ENCODE measurements at regions of chr22 and their contacts with region 1.

Region 1: GRCh38 chr22:21726650-21727049 is 8.9 kb downstream of the YPEL1 start:
- DNase-seq: peak; percentile 38
- H3K4me3 Mint-ChIP-seq: no peak overlapping the region
- H3K27ac Mint-ChIP-seq: no peak overlapping the region
- H3K4me1 Mint-ChIP-seq: peaks cover 16% of the 10 kb centered on the region
- H3K27me3 Mint-ChIP-seq: no peaks in the 10 kb centered on the region

Region 2: DNA sequence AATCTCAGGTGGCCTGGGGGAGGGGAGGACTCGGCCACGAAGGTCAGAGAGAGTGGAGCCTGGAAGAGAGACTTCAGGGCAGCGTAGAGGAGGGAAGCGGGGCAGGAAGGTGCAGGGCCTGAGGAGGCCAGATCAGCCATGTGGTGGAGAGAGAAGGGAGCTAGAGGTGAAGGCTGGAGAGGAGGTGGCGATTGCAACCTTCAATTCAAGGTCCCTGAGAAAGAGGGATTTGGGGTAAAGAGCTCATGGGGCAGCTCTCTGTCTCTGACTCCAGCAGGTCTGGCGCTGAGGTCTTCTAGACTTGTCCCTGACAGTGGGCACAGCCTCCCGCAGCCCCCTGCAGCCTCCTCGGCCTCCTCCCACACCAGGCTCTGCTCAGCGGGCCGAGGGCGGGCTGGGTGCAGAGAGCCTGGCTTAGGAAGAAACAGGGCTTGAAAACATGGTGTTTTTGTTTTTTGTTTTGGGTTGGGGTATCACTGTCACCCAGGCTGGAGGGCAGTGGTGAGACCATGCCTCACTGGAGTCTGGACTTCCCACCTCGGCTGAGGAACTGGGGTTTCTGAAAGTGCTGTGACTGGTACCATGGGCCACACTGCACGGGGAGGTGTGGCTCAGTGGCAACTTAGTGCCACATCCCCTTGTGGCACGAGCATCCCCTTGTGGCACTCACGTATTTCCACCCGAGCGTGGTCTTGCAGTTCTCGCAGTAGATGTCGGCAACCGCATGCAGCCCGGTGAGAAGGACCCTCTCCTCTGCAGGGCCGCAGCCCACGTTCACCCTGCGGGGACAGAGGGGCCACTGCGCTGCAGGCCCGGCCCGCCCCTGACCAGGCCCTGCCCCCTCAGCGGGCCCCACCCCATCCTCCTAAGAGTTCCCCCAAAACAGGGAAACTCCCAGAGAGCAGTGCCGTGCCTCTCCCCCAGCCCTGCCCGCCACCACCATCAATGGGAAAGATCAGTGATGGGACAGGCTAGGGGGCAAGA is 23.7 kb before region 1 on chr22:
- intact Hi-C with region 1: no loop called
- DNase-seq: no peak
- H3K4me3 Mint-ChIP-seq: no peak overlapping the region
- H3K27ac Mint-ChIP-seq: no peak overlapping the region
- H3K4me1 Mint-ChIP-seq: no peaks in the 10 kb centered on the region
- H3K27me3 Mint-ChIP-seq: no peaks in the 10 kb centered on the region

Region 3: DNA sequence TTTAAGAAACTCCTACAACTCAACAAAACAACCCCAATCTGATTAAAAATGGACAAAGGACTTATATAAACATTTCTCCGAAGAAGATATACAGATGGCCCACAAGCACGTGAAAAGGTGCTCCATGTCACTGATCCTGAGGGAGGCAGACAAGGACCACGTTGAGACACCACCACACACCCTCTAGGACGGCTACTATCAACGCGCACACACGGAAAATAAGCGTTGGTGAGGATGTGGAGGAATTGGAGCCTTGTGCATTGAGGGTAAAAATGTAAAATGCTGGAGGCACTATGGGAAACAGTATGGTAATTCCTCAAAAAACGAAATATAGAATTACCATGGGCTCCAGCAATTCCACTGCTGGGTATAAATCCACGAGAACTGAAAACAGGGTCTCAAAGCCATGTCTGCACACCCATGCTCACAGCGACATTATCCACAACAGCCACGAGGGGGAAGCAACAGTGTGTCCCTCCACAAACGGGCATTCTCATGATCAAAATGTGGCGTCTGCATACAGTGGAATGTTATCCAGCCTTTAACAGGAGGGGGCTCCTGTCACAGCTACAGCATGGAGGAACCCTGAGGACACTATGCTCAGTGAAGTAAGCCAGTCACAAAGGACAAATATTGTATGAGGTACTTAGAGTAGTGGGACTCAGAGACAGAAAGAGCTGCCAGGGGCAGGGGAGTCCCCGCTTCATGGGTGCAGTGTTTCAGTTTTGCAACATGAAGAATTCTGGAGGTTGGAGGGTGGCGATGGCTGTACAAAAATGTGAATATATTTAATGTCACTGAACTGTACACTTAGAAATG is 13.5 kb before region 1 on chr22:
- intact Hi-C with region 1: loop called (anchors 1 kb)
- DNase-seq: peak; percentile 36
- H3K4me3 Mint-ChIP-seq: no peak overlapping the region
- H3K27ac Mint-ChIP-seq: no peak overlapping the region
- H3K4me1 Mint-ChIP-seq: peaks cover 7% of the 10 kb centered on the region
- H3K27me3 Mint-ChIP-seq: peaks cover 9% of the 10 kb centered on the region

Region 4: DNA sequence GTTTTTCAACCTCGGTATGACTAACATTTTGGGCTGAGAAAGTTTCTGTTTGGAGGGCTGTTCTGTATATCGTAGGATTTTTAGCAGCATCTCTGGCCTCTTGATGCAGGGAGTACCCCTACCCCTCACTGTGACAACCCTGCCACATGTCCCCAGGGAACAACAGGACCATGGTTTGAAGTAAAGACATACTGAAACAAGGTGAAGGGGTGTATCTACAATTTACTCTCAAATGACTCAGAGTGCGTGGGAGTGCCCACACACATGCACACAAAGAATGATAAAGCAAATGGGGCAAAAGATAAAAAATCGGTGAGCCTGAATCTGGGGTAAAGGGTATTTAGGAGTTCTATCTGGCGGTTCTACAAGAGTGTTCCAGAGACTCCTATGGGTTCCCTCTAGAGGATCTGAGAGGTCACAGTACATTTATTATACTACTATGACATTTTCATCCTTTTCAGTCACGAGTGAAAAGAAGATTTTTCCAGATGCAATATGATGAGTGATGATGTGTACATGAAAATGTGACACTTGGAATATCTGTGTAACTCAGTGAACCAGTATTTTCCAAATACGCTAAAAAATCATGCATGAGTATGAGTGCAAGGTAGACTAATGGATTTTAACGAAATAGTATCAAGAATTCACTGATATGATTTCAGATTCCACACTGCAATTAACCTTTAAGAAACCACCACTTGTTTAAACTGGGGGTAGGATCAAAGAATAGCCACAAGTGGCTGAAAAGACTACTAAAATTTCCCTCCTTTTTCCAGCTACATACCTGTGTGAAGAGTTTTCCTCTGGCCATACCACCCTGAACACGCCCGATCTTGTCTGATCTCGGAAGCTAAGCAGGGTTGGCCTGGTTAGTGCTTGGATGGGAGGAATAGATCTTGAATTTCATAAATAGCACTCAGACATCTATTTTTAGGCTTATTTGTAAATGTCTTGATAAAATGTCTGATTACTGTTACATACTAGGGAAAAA is 65.3 kb after region 1 on chr22:
- intact Hi-C with region 1: no loop called
- DNase-seq: peak; percentile 12
- H3K4me3 Mint-ChIP-seq: no peak overlapping the region
- H3K27ac Mint-ChIP-seq: peak overlapping the region; percentile 72
- H3K4me1 Mint-ChIP-seq: peaks cover 12% of the 10 kb centered on the region
- H3K27me3 Mint-ChIP-seq: no peaks in the 10 kb centered on the region